ENCODE measurements at regions of chr19 and their contacts with region 1.

Region 1: DNA sequence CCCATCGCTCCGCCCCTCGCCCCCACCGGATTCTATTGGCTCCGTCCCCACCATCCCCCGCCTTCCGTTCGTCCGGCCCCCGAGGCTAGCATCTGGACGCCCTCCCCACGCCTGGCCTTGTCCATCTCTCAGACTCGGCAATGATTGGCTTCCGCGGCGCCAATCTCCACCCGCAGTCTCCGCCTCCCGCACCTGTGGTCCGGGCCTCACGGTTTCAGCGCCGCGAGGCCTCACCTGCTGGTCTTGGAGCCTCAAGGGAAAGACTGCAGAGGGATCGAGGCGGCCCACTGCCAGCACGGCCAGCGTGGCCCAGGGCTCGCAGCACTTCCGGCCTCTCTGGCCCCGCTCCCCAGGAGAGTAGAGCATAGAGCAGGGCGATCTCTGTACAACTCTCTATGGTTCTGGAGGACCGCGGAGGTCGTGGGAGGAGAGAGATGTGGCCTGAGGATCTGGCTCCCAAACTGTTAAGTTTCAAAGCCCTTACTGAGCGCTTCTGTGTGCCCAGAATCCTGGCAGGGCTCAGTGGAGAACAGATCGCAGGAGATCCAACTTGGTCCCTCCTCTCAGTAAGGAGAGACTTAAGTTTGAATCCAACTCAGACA is at the start of gene ERCC1:
- DNase-seq: peak; percentile 98
- ATAC-seq: peak; percentile 77 to 87
- H3K4me3 ChIP-seq: peak within 1 kb of the TSS; percentile 58
- H3K27ac ChIP-seq: peak within 1 kb of the TSS; percentile 93 to 95
- H3K4me1 ChIP-seq: peaks cover 31% of the 10 kb centered on the region
- CTCF ChIP-seq: no peak
- EP300 ChIP-seq: peak in 1 of 2 experiments; percentile 10; a peak in 1 of 5 replicates
- POLR2A ChIP-seq: peak; percentile 84
- RAD21 ChIP-seq: no peak
- polyA plus RNA-seq, gene ERCC1: 81.7 and 109 TPM in 2 replicates

Region 2: DNA sequence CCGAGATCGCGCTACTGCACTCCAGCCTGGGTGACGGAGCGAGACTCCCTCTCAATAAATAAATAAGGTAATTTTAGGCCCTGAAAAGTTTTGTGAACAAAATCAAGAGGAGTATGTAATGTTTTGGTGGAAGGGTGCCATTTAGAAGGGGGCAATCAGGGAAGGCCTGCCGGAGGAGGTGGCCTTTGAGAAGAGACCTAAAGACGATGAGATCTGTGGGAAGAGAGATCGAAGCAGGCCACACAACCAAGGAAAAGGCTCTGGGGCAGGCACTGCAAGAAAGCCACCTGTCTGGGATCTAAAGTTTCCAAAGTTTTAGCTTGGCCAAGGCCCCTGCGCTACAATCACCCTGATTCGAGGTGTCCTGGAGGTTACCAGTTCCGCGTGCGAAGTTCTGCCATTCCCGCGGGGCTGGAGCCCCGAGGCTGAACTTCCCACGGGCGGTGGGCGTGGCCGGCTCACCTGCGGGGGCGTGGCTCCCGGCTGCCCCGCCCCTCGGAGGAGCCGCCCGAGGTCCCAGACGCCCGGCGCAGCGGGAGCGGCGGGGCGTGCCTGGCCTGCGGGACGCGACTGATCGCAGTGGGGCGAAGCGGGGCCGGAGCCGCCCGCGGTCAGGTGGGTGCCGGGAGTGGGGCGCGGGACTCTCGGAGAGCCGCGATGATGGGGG is 83.3 kb before region 1 on chr19 and contains the start of gene KLC3:
- CTCF ChIA-PET with region 1: no interaction called
- POLR2A ChIA-PET with region 1: no interaction called
- DNase-seq: peak in 1 of 2 experiments; percentile 26
- ATAC-seq: peak; percentile 21 to 26; a peak in 3 of 6 replicates
- H3K4me3 ChIP-seq: peak within 1 kb of the TSS; percentile 59
- H3K27ac ChIP-seq: peak within 1 kb of the TSS; percentile 52 to 81; a peak in 4 of 6 replicates
- H3K4me1 ChIP-seq: peaks cover 3% of the 10 kb centered on the region; the same call in 2 of the 3 replicates
- CTCF ChIP-seq: no peak
- EP300 ChIP-seq: no peak
- POLR2A ChIP-seq: no peak
- RAD21 ChIP-seq: no peak
- polyA plus RNA-seq, gene KLC3: 0.26 and 0.32 TPM in 2 replicates

Region 3: GRCh38 chr19:45368127-45368526 is 55.6 kb before region 1 on chr19:
- CTCF ChIA-PET with region 1: no interaction called
- POLR2A ChIA-PET with region 1: no interaction called
- DNase-seq: no peak
- ATAC-seq: no peak
- H3K4me3 ChIP-seq: no peak overlapping the region
- H3K27ac ChIP-seq: no peak overlapping the region
- H3K4me1 ChIP-seq: no peaks in the 10 kb centered on the region
- CTCF ChIP-seq: no peak
- EP300 ChIP-seq: no peak
- POLR2A ChIP-seq: no peak
- RAD21 ChIP-seq: no peak

Region 4: DNA sequence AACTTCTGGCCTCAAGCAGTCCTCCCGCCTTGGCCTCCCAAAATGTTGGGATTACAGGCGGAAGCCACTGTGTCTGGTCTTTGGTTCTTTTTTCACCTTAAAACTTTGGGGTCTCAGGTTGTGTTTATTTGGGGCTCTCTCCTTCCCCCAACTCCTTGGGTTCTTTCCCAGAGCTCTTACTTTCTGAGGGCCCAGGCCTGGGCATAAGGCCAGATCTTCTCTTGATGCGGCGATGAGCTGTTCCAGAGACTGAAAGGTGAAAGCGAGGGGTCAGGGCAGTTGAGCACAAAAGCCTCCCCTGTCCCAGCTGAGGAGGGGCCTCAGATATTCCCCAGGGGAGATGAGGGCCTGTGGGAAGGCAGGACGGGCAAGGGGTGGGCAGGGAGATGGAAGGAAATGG is 10.2 kb before region 1 on chr19:
- CTCF ChIA-PET with region 1: interaction called, 11 read pairs
- POLR2A ChIA-PET with region 1: interaction called, 5 read pairs
- DNase-seq: no peak
- ATAC-seq: no peak
- H3K4me3 ChIP-seq: no peak overlapping the region
- H3K27ac ChIP-seq: no peak overlapping the region
- H3K4me1 ChIP-seq: 0 out of 3 replicates have a peak, but pooled peaks cover 4% of the 10 kb centered on the region
- CTCF ChIP-seq: no peak
- EP300 ChIP-seq: no peak
- POLR2A ChIP-seq: no peak
- RAD21 ChIP-seq: no peak

Region 5: GRCh38 chr19:45523642-45524256 is 100.1 kb after region 1 on chr19:
- CTCF ChIA-PET with region 1: no interaction called
- POLR2A ChIA-PET with region 1: no interaction called
- DNase-seq: peak; percentile 94
- ATAC-seq: peak; percentile 92 to 93
- H3K4me3 ChIP-seq: no peak overlapping the region
- H3K27ac ChIP-seq: peak overlapping the region in 1 of 2 experiments; percentile 47; a peak in 1 of 6 replicates
- H3K4me1 ChIP-seq: peaks cover 20% of the 10 kb centered on the region
- CTCF ChIP-seq: peak; percentile 97
- EP300 ChIP-seq: no peak
- POLR2A ChIP-seq: no peak
- RAD21 ChIP-seq: peak; percentile 97 to 98

Measured in A549 (cell line).